Naive thymus-derived CD4-positive, alpha-beta T cell (primary cell): ENCODE measurements at regions of chr4 and their contacts with region 1.

Region 1: DNA sequence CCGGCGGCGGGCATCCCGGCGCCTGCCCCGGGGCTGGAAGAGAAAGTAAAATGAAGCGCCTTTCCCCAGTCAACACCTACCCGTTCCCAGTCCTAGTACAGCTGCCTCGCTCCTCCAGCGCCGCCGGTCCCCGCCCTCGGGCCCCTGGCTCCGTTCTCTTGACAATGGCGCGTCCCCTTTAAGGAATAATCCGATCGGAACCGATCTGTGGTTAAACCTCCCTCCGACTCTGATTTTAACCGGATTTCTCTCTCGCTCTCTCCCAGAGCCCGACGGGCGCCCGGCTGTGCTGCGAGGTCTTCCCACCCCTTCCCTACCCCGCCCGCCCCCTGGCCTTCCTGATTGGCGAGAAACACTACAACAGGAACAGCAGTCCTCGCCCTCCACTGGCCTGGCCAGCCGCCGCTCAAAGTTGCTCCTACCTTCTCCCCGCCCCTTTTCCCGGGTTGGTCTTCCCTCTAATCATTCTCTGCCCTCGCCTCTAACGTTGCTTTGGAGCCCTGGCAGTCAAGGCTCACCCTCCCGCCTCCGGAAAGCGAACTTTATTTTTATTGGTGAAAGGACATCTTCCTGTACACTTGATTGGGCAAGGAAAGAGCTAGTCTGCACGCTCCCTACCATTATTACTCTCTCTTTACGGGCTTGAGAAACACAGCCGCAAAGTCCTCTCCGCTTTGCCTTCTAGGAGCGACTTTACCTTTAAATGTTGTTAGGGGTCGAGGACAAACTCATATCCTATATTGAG is at the start of gene FRYL:
- DNase-seq: peak; percentile 87 to 99 (median 98)
- ATAC-seq: peak; percentile 92
- H3K4me3 ChIP-seq: peak within 1 kb of the TSS; percentile 80
- H3K4me3 Mint-ChIP-seq: peak within 1 kb of the TSS; percentile 76 to 96 (median 92)
- H3K27ac ChIP-seq: peak within 1 kb of the TSS; percentile 89
- H3K27ac Mint-ChIP-seq: peak within 1 kb of the TSS; percentile 76 to 96 (median 88)
- H3K4me1 ChIP-seq: peaks cover 18 to 23% of the 10 kb centered on the region in 2 donors
- H3K4me1 Mint-ChIP-seq: peaks cover 35 to 49% (median 46%) of the 10 kb centered on the region in 7 donors
- H3K27me3 ChIP-seq: no peaks in the 10 kb centered on the region
- H3K27me3 Mint-ChIP-seq: no peaks in the 10 kb centered on the region
- total RNA-seq, gene FRYL: 89.5 to 126 (median 112) TPM

Region 2: GRCh38 chr4:47463235-47463956 is 1316.8 kb before region 1 on chr4 and contains the start of gene COMMD8:
- CTCF ChIA-PET with region 1: no interaction called
- POLR2A ChIA-PET with region 1: no interaction called
- intact Hi-C with region 1: loop called in 1 of 2 experiments (anchors 1 kb)
- DNase-seq: peak; percentile 91 to 97 (median 95)
- ATAC-seq: peak; percentile 93
- H3K4me3 ChIP-seq: peak within 1 kb of the TSS; percentile 82
- H3K4me3 Mint-ChIP-seq: peak within 1 kb of the TSS; percentile 77 to 93 (median 90)
- H3K27ac ChIP-seq: peak within 1 kb of the TSS; percentile 74
- H3K27ac Mint-ChIP-seq: peak within 1 kb of the TSS; percentile 76 to 97 (median 95)
- H3K4me1 ChIP-seq: peaks cover 9 to 17% of the 10 kb centered on the region in 2 donors
- H3K4me1 Mint-ChIP-seq: peaks cover 20 to 48% (median 38%) of the 10 kb centered on the region in 7 donors
- H3K27me3 ChIP-seq: no peaks in the 10 kb centered on the region
- H3K27me3 Mint-ChIP-seq: no peaks in the 10 kb centered on the region
- total RNA-seq, gene COMMD8: 8.4 to 19.3 (median 16.7) TPM

Region 3: DNA sequence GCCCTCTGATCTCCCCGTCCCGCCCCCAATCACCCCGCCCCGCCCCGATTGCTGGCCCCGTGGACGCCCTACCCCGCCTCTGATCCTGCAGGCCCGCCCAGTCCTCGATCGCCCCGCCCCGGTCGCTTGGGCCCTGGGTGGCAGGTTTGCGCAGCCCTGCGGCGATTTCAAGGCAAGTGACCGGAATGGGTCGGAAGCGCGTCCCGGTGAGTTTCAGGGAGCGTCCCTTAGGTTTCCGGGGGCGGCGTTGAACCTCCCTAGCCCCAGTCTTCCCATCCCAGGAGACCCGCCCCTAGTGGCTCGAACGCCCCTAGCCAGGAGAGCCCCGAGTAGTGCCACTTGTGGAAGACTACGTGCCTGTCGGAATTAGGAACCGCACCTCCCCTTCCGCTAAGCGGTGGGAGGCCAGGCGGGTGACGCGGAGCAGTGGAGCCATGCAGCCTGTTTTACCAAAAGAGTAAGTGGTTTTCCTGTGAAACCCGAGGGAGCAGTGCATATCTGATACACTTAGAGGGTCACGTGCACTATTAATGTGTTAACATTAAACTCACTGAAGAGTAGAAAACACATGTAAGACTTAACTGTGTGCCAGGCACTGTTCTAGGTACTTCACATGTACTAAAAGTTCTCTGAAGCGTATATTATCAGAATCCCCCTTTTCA is 510.2 kb before region 1 on chr4:
- CTCF ChIA-PET with region 1: no interaction called
- POLR2A ChIA-PET with region 1: no interaction called
- intact Hi-C with region 1: loop called (anchors 2 kb)
- DNase-seq: peak; percentile 48 to 88 (median 69)
- ATAC-seq: peak; percentile 95
- H3K4me3 ChIP-seq: peak overlapping the region; percentile 88
- H3K4me3 Mint-ChIP-seq: peak overlapping the region; percentile 95 to 98 (median 97)
- H3K27ac ChIP-seq: peak overlapping the region; percentile 73
- H3K27ac Mint-ChIP-seq: peak overlapping the region; percentile 20 to 94 (median 86)
- H3K4me1 ChIP-seq: peaks cover 0 to 6% of the 10 kb centered on the region in 2 donors
- H3K4me1 Mint-ChIP-seq: peaks cover 6 to 28% (median 22%) of the 10 kb centered on the region in 7 donors
- H3K27me3 ChIP-seq: no peaks in the 10 kb centered on the region
- H3K27me3 Mint-ChIP-seq: no peaks in the 10 kb centered on the region

Region 4: GRCh38 chr4:48681856-48682255 is 98.3 kb before region 1 on chr4:
- CTCF ChIA-PET with region 1: no interaction called
- POLR2A ChIA-PET with region 1: no interaction called
- intact Hi-C with region 1: loop called (anchors 2 to 10 kb)
- DNase-seq: peak in 6 of 9 donors; percentile 4 to 43 (median 25)
- ATAC-seq: peak; percentile 70
- H3K4me3 ChIP-seq: no peak overlapping the region
- H3K4me3 Mint-ChIP-seq: peak overlapping the region in 1 of 10 donors; percentile 26
- H3K27ac ChIP-seq: no peak overlapping the region
- H3K27ac Mint-ChIP-seq: peak overlapping the region in 7 of 9 donors; percentile 35 to 86 (median 69)
- H3K4me1 ChIP-seq: peaks cover 4 to 9% of the 10 kb centered on the region in 2 donors
- H3K4me1 Mint-ChIP-seq: peaks cover 22 to 52% (median 45%) of the 10 kb centered on the region in 7 donors
- H3K27me3 ChIP-seq: no peaks in the 10 kb centered on the region
- H3K27me3 Mint-ChIP-seq: no peaks in the 10 kb centered on the region

Region 5: DNA sequence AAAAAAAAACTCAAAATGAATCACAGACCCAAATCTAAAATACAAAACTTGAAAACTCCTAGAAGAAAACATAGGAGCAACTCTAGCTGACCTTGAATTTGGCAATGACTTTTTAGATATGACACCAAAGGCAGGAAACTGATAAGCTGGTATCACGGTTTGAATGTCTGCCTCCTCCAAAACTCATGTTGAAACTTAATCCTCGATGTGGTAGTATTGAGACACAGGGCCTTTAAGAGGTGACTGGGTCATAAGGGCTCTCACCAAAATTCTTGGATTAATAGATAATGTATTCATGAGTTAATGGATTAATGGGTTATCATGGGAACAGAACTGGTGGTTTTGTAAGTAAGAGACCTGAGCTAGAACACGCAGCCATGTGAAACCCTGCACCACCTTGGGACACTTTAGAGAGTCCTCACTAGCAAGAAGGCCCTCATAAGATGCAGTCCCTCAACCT is 40.6 kb before region 1 on chr4:
- CTCF ChIA-PET with region 1: no interaction called
- POLR2A ChIA-PET with region 1: interaction called, 3 read pairs
- intact Hi-C with region 1: loop called (anchors 5 kb)
- DNase-seq: no peak
- ATAC-seq: peak; percentile 58
- H3K4me3 ChIP-seq: no peak overlapping the region
- H3K4me3 Mint-ChIP-seq: peak overlapping the region in 7 of 10 donors; percentile 16 to 63 (median 43)
- H3K27ac ChIP-seq: peak overlapping the region; percentile 23
- H3K27ac Mint-ChIP-seq: peak overlapping the region in 7 of 9 donors; percentile 51 to 69 (median 55)
- H3K4me1 ChIP-seq: peaks cover 24 to 31% of the 10 kb centered on the region in 2 donors
- H3K4me1 Mint-ChIP-seq: peaks cover 45 to 88% (median 78%) of the 10 kb centered on the region in 7 donors
- H3K27me3 ChIP-seq: no peaks in the 10 kb centered on the region
- H3K27me3 Mint-ChIP-seq: no peaks in the 10 kb centered on the region

Region 6: GRCh38 chr4:48906206-48907173 is 126.3 kb after region 1 on chr4 and contains the start of gene OCIAD2:
- CTCF ChIA-PET with region 1: no interaction called
- POLR2A ChIA-PET with region 1: interaction called, 8 read pairs
- intact Hi-C with region 1: loop called (anchors 1 kb)
- DNase-seq: peak; percentile 59 to 88 (median 86)
- ATAC-seq: peak; percentile 97
- H3K4me3 ChIP-seq: peak within 1 kb of the TSS; percentile 80
- H3K4me3 Mint-ChIP-seq: peak within 1 kb of the TSS; percentile 93 to 99 (median 97)
- H3K27ac ChIP-seq: peak within 1 kb of the TSS; percentile 82
- H3K27ac Mint-ChIP-seq: peak within 1 kb of the TSS; percentile 89 to 99 (median 96)
- H3K4me1 ChIP-seq: peaks cover 18 to 33% of the 10 kb centered on the region in 2 donors
- H3K4me1 Mint-ChIP-seq: peaks cover 32 to 63% (median 52%) of the 10 kb centered on the region in 7 donors
- H3K27me3 ChIP-seq: no peaks in the 10 kb centered on the region
- H3K27me3 Mint-ChIP-seq: no peaks in the 10 kb centered on the region
- total RNA-seq, gene OCIAD2: 42.0 to 142 (median 97.5) TPM